Heart left ventricle (tissue), 16 donors: ENCODE measurements at regions of chr11 and their contacts with region 1.

Region 1: GRCh38 chr11:42770444-42771065 is 541.2 kb upstream of the API5 start:
- DNase-seq: peak in 2 of 5 donors; percentile 17
- ATAC-seq: no peak
- H3K4me3 ChIP-seq: no peak overlapping the region
- H3K27ac ChIP-seq: no peak overlapping the region
- H3K4me1 ChIP-seq: no peaks in the 10 kb centered on the region
- H3K27me3 ChIP-seq: peaks cover 0 to 5% (median 0%) of the 10 kb centered on the region in 9 donors
- CTCF ChIP-seq: peak; percentile 49 to 76 (median 68)
- POLR2A ChIP-seq: no peak

Region 2: DNA sequence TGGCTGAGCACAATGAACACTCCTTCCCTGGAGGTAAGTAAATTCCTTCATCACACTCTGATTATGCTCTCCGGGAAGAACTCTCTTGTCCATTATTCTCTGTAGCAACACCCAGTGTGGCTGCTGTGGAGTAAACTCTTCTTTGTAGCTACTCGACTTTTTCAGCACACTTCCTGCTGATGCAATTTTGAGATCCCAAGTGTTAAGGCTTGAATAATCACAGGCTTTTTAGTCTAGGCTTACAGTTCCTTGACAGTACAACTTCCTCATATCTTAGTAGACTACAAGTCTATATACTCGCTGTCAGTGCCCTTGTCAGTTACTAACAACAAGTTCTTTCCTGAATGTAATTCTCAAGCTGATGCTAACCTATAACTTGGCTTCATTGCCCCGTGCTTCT is 239.5 kb after region 1 on chr11:
- intact Hi-C with region 1: loop called in 1 of 10 experiments (anchors 10 kb)
- DNase-seq: no peak
- ATAC-seq: no peak
- H3K4me3 ChIP-seq: no peak overlapping the region
- H3K27ac ChIP-seq: no peak overlapping the region
- H3K4me1 ChIP-seq: no peaks in the 10 kb centered on the region
- H3K27me3 ChIP-seq: no peaks in the 10 kb centered on the region
- CTCF ChIP-seq: no peak
- POLR2A ChIP-seq: no peak

Region 3: DNA sequence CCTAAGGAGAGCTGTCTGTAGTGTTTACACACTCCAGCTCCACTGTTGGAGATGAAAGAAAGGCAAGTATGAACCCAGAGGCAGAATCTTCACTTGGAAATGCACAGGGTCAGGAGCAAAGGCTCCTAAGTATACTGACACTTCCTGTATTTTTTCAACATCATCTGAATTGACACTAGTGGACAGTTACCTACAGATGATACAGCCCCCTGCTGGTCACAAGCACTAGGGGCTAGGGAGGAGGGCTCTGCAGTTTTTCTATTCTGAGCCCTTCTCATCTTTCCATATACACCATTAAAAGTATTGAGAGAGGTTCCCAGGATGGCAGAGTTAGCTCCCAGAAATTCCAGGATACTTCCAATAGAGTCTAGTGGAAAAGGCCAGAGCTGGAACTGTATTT is 250.9 kb after region 1 on chr11:
- intact Hi-C with region 1: loop called in 6 of 10 experiments (anchors 2 to 10 kb)
- DNase-seq: peak in 1 of 5 donors; percentile 21
- ATAC-seq: peak in 2 of 4 donors; percentile 34 to 38
- H3K4me3 ChIP-seq: no peak overlapping the region
- H3K27ac ChIP-seq: no peak overlapping the region
- H3K4me1 ChIP-seq: no peaks in the 10 kb centered on the region
- H3K27me3 ChIP-seq: no peaks in the 10 kb centered on the region
- CTCF ChIP-seq: peak; percentile 9 to 52 (median 32)
- POLR2A ChIP-seq: no peak

Region 4: GRCh38 chr11:43130616-43131015 is 360.1 kb after region 1 on chr11:
- intact Hi-C with region 1: loop called in 9 of 10 experiments (anchors 1 to 10 kb)
- DNase-seq: no peak
- ATAC-seq: peak in 3 of 4 donors; percentile 41 to 54 (median 50)
- H3K4me3 ChIP-seq: no peak overlapping the region
- H3K27ac ChIP-seq: no peak overlapping the region
- H3K4me1 ChIP-seq: no peaks in the 10 kb centered on the region
- H3K27me3 ChIP-seq: peaks cover 0 to 4% (median 0%) of the 10 kb centered on the region in 9 donors
- CTCF ChIP-seq: peak in 11 of 12 donors; percentile 5 to 50 (median 34)
- POLR2A ChIP-seq: no peak

Region 5: DNA sequence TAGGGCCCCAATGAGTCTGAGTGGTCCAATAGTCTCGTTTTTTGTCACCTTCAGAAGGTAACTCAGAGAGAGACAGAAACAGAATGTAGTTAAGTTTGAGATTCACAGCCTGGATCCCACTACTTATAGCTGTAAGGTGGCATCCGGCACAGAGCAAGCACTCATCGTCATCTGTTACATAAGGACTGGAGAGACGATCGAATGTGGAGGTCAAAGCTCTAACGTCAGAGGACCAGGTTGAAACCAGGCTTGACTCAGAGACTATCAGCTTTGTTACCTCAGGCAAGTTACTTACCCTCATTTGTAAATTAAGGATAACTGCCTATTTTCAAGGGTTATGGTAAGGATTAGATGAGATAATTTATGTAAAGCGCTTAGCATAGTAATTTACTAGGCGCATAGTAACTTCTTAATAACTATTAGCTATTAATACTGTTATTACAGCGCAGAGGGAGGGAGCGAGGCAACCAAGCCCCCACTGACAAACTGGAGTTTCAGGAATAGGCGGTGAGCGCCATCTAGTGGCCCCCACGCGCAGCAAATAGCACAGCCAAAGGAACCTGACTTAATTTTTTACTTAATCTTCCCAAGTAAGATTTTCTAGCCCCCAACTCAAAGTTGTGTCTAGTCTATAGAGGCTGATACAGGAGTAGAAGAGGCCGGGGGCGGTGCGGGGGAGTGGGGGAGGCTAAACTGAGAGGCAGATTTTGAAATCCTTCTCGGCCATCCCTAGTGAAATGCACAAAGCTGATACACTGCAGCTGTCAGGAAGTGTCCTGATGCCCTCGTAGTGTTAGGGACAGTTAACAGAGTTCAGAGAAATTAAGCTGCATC is 512.3 kb after region 1 on chr11:
- intact Hi-C with region 1: loop called (anchors 2 to 5 kb)
- DNase-seq: peak in 2 of 5 donors; percentile 33 to 73
- ATAC-seq: peak in 2 of 4 donors; percentile 18 to 60
- H3K4me3 ChIP-seq: no peak overlapping the region
- H3K27ac ChIP-seq: no peak overlapping the region
- H3K4me1 ChIP-seq: no peaks in the 10 kb centered on the region
- H3K27me3 ChIP-seq: peaks cover 0 to 45% (median 4%) of the 10 kb centered on the region in 9 donors
- CTCF ChIP-seq: peak; percentile 76 to 93 (median 90)
- POLR2A ChIP-seq: no peak